ENCODE measurements at regions of chr3 and their contacts with region 1.

Region 1: DNA sequence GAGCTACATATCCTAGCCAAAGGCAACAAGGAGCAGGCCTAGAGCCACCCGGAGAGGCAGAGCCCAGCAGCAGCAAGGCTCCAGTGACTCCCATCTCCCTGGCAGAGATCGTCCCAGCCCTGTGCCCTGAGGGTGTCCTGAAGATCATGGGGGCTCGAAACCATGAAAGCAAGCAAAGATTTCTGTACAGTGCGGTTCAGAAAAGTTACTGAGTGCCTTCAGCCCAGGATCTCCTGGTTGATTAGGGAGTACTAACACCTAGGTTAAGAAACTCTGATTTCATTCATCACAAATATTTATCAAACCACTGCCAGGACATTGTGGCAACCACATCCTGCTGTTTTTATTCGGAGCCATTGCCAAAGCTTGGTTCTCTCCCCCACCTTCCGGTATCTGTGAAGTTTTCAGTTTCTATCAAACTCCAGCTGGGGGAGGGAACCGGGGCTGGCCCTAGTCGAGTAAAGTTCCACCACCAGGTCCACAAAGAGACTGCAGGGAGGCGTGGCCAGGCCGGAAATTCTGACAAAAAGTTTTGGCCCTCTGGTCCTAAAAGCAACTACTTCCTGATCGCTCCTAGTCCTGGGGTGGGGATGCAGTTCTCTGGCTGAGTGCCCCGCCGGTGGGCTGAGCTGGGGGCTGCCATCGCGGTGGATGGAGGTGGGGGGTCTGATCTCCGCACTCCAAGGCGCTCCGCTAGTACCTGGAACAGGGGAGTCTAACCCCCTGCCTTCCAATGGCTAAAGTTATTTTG is 1.2 kb downstream of the RAB43 start:
- DNase-seq: peak; percentile 78 to 98 (median 87)
- ATAC-seq: peak; percentile 61
- H3K4me3 ChIP-seq: peak overlapping the region; percentile 93
- H3K4me3 Mint-ChIP-seq: peak overlapping the region; percentile 95
- H3K27ac ChIP-seq: peak overlapping the region; percentile 82 to 90
- H3K27ac Mint-ChIP-seq: peak overlapping the region; percentile 89
- H3K4me1 ChIP-seq: peaks cover 68% of the 10 kb centered on the region
- H3K4me1 Mint-ChIP-seq: peaks cover 51% of the 10 kb centered on the region
- H3K27me3 ChIP-seq: no peaks in the 10 kb centered on the region
- H3K27me3 Mint-ChIP-seq: no peaks in the 10 kb centered on the region
- CTCF ChIP-seq: peak; percentile 36

Region 2: GRCh38 chr3:128075516-128076482 is 1044.6 kb before region 1 on chr3:
- CTCF ChIA-PET with region 1: no interaction called
- POLR2A ChIA-PET with region 1: no interaction called
- intact Hi-C with region 1: no loop called
- DNase-seq: peak; percentile 74 to 93 (median 83)
- ATAC-seq: peak; percentile 89
- H3K4me3 ChIP-seq: peak overlapping the region; percentile 66
- H3K4me3 Mint-ChIP-seq: peak overlapping the region; percentile 77
- H3K27ac ChIP-seq: no peak overlapping the region
- H3K27ac Mint-ChIP-seq: no peak overlapping the region
- H3K4me1 ChIP-seq: peaks cover 23% of the 10 kb centered on the region
- H3K4me1 Mint-ChIP-seq: peaks cover 5% of the 10 kb centered on the region
- H3K27me3 ChIP-seq: peaks cover 8 to 10% of the 10 kb centered on the region in 2 experiments
- H3K27me3 Mint-ChIP-seq: no peaks in the 10 kb centered on the region
- CTCF ChIP-seq: peak; percentile 87

Region 3: GRCh38 chr3:128879125-128879969 is 241.1 kb before region 1 on chr3 and contains the start of gene ACAD9:
- CTCF ChIA-PET with region 1: no interaction called
- POLR2A ChIA-PET with region 1: interaction called, 26 read pairs
- intact Hi-C with region 1: no loop called
- DNase-seq: peak; percentile 92 to 99 (median 96)
- ATAC-seq: peak; percentile 87
- H3K4me3 ChIP-seq: peak within 1 kb of the TSS; percentile 94
- H3K4me3 Mint-ChIP-seq: peak within 1 kb of the TSS; percentile 88
- H3K27ac ChIP-seq: peak within 1 kb of the TSS; percentile 91 to 99
- H3K27ac Mint-ChIP-seq: peak within 1 kb of the TSS; percentile 92
- H3K4me1 ChIP-seq: peaks cover 56% of the 10 kb centered on the region
- H3K4me1 Mint-ChIP-seq: peaks cover 74% of the 10 kb centered on the region
- H3K27me3 ChIP-seq: no peaks in the 10 kb centered on the region
- H3K27me3 Mint-ChIP-seq: no peaks in the 10 kb centered on the region
- CTCF ChIP-seq: no peak
- total RNA-seq, gene ACAD9: 64.8 to 71.6 TPM

Region 4: DNA sequence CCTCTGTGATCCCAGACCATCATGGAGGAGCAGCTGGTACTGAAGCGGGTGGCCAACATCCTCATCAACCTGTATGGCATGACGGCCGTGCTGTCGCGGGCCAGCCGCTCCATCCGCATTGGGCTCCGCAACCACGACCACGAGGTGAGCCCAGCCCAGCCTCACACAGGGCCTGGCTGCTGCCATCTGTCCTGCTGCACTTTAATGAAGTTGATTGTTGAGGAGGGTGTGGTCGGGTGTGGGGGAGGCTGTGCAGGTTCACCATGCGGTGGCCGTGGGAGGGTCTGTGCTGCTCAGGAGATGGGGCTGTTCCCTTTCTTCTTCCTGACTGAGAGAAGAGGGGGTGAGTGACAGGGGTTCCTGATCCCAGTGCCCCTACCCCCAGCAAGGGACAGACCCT is 210.4 kb before region 1 on chr3:
- CTCF ChIA-PET with region 1: no interaction called
- POLR2A ChIA-PET with region 1: no interaction called
- intact Hi-C with region 1: no loop called
- DNase-seq: no peak
- ATAC-seq: no peak
- H3K4me3 ChIP-seq: no peak overlapping the region
- H3K4me3 Mint-ChIP-seq: no peak overlapping the region
- H3K27ac ChIP-seq: no peak overlapping the region
- H3K27ac Mint-ChIP-seq: no peak overlapping the region
- H3K4me1 ChIP-seq: no peaks in the 10 kb centered on the region
- H3K4me1 Mint-ChIP-seq: no peaks in the 10 kb centered on the region
- H3K27me3 ChIP-seq: no peaks in the 10 kb centered on the region
- H3K27me3 Mint-ChIP-seq: no peaks in the 10 kb centered on the region
- CTCF ChIP-seq: no peak

Region 5: GRCh38 chr3:129026728-129027543 is 93.5 kb before region 1 on chr3:
- CTCF ChIA-PET with region 1: interaction called, 7 read pairs
- POLR2A ChIA-PET with region 1: interaction called, 28 read pairs
- intact Hi-C with region 1: no loop called
- DNase-seq: peak; percentile 85 to 97 (median 90)
- ATAC-seq: peak; percentile 99
- H3K4me3 ChIP-seq: peak overlapping the region; percentile 54
- H3K4me3 Mint-ChIP-seq: peak overlapping the region; percentile 78
- H3K27ac ChIP-seq: peak overlapping the region; percentile 71 to 83
- H3K27ac Mint-ChIP-seq: peak overlapping the region; percentile 95
- H3K4me1 ChIP-seq: peaks cover 22% of the 10 kb centered on the region
- H3K4me1 Mint-ChIP-seq: peaks cover 18% of the 10 kb centered on the region
- H3K27me3 ChIP-seq: no peaks in the 10 kb centered on the region
- H3K27me3 Mint-ChIP-seq: no peaks in the 10 kb centered on the region
- CTCF ChIP-seq: peak; percentile 82

Region 6: GRCh38 chr3:129085165-129085715 is 35.2 kb before region 1 on chr3:
- CTCF ChIA-PET with region 1: no interaction called
- POLR2A ChIA-PET with region 1: interaction called, 25 read pairs
- intact Hi-C with region 1: loop called in 1 of 2 experiments (anchors 5 kb)
- DNase-seq: no peak
- ATAC-seq: no peak
- H3K4me3 ChIP-seq: no peak overlapping the region
- H3K4me3 Mint-ChIP-seq: no peak overlapping the region
- H3K27ac ChIP-seq: no peak overlapping the region
- H3K27ac Mint-ChIP-seq: peak overlapping the region; percentile 69
- H3K4me1 ChIP-seq: peaks cover 4% of the 10 kb centered on the region
- H3K4me1 Mint-ChIP-seq: peaks cover 23% of the 10 kb centered on the region
- H3K27me3 ChIP-seq: no peaks in the 10 kb centered on the region
- H3K27me3 Mint-ChIP-seq: no peaks in the 10 kb centered on the region
- CTCF ChIP-seq: no peak

Region 7: GRCh38 chr3:129160891-129161859 is 40.7 kb after region 1 on chr3 and contains the start of gene ISY1:
- CTCF ChIA-PET with region 1: interaction called, 5 read pairs
- POLR2A ChIA-PET with region 1: interaction called, 6 read pairs
- intact Hi-C with region 1: loop called (anchors 1 kb)
- DNase-seq: peak; percentile 70 to 97 (median 84)
- ATAC-seq: peak; percentile 74
- H3K4me3 ChIP-seq: peak within 1 kb of the TSS; percentile 82
- H3K4me3 Mint-ChIP-seq: peak within 1 kb of the TSS; percentile 96
- H3K27ac ChIP-seq: peak within 1 kb of the TSS; percentile 92 to 99
- H3K27ac Mint-ChIP-seq: peak within 1 kb of the TSS; percentile 95
- H3K4me1 ChIP-seq: peaks cover 24% of the 10 kb centered on the region
- H3K4me1 Mint-ChIP-seq: peaks cover 55% of the 10 kb centered on the region
- H3K27me3 ChIP-seq: no peaks in the 10 kb centered on the region
- H3K27me3 Mint-ChIP-seq: no peaks in the 10 kb centered on the region
- CTCF ChIP-seq: peak; percentile 76
- total RNA-seq, gene ISY1: 28.2 to 28.5 TPM

Region 8: GRCh38 chr3:129278439-129278970 is 158.1 kb after region 1 on chr3 and contains the start of gene HMCES:
- CTCF ChIA-PET with region 1: no interaction called
- POLR2A ChIA-PET with region 1: interaction called, 21 read pairs
- intact Hi-C with region 1: no loop called
- DNase-seq: peak; percentile 91 to 98 (median 95)
- ATAC-seq: peak; percentile 92
- H3K4me3 ChIP-seq: peak within 1 kb of the TSS; percentile 79
- H3K4me3 Mint-ChIP-seq: peak within 1 kb of the TSS; percentile 97
- H3K27ac ChIP-seq: peak within 1 kb of the TSS; percentile 90 to 93
- H3K27ac Mint-ChIP-seq: peak within 1 kb of the TSS; percentile 95
- H3K4me1 ChIP-seq: peaks cover 45% of the 10 kb centered on the region
- H3K4me1 Mint-ChIP-seq: peaks cover 43% of the 10 kb centered on the region
- H3K27me3 ChIP-seq: no peaks in the 10 kb centered on the region
- H3K27me3 Mint-ChIP-seq: no peaks in the 10 kb centered on the region
- CTCF ChIP-seq: no peak
- total RNA-seq, gene HMCES: 63.5 to 64.0 TPM

Region 9: DNA sequence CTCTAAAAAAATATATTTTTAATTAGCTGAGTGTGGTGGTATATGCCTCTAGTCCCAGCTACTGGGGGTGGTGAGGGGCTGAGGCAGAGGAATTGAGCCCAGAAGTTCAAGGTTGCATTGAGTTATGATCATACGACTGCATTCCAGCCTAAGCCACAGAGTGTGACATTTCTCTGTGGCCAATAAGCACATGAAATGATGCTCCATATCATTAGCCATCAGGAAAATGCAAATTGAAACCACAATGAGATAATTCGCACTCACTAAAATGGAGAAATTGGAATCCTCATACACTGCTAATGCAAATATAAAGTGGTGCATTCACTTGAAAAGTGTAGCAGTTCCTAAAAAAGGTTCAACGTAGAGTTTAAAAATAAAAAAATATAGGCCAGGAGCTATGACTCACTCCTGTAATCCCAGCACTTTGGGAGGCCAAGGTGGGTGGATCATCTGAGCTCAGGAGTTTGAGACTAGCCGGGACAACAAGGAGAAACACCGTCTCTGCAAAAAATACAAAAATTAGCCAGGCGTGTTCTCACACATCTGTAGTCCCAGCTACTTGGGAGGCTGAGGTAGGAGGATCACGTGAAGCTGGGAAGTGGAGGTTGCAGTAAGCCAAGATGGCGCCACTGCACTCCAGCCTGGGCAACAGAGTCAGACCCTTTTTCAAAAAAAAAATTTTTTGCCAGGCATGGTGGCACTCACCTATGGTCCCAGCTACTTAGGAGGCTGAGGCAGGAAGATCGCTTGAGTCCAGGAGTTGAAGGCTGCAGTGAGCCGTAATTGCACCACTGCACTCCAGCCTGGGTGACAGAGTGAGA is 354.8 kb after region 1 on chr3:
- CTCF ChIA-PET with region 1: no interaction called
- POLR2A ChIA-PET with region 1: no interaction called
- intact Hi-C with region 1: no loop called
- DNase-seq: no peak
- ATAC-seq: no peak
- H3K4me3 ChIP-seq: no peak overlapping the region
- H3K4me3 Mint-ChIP-seq: no peak overlapping the region
- H3K27ac ChIP-seq: no peak overlapping the region
- H3K27ac Mint-ChIP-seq: no peak overlapping the region
- H3K4me1 ChIP-seq: no peaks in the 10 kb centered on the region
- H3K4me1 Mint-ChIP-seq: peaks cover 3% of the 10 kb centered on the region
- H3K27me3 ChIP-seq: no peaks in the 10 kb centered on the region
- H3K27me3 Mint-ChIP-seq: no peaks in the 10 kb centered on the region
- CTCF ChIP-seq: no peak

Measured in CD4-positive, alpha-beta T cell (primary cell).